ENCODE measurements at regions of chr4 and their contacts with region 1.

Region 1: DNA sequence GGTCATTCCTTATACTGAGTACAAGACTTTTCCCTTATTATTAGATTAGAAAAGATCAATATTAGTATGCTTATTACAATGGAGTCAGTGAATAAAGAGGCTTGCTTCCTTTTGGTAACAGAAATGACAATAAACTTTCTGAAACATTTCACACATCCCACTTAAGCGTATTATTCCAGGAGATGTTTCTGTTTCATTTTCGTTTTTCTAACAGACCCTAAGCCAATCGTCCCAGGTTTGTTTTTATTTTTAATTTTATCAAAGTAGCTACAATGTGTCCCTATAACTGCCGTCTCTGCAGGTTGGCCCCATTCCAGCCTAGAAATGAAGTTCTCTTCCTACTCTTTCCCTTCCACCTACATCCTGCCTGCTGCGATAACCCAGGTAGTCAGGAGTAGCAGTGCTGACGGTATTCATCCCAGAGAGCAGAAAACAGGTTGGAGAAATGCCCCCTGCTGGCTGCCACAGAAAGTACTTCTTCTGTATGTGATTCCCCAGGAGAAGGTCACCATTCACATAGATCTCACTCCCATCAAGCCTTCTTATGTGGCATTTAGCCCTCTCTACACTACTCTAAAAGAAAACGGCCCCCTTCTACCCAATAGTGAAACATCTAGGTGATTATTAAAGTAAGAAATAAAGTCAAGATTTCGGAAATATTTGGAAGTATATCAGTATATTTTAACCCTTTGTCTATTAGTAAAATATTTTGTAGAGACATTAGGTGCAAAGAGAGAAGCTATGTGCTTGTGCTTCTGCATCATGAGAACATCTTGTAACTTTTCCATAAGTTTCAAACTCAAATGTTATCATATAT is 40.4 kb downstream of the ENPEP start:
- DNase-seq: peak; percentile 79 to 84
- ATAC-seq: peak; percentile 99

Region 2: GRCh38 chr4:109998867-109999584 is 517.3 kb before region 1 on chr4:
- intact Hi-C with region 1: loop called (anchors 2 to 10 kb)
- DNase-seq: no peak
- ATAC-seq: peak; percentile 88

Region 3: GRCh38 chr4:110005461-110006056 is 510.8 kb before region 1 on chr4:
- intact Hi-C with region 1: loop called in 1 of 2 experiments (anchors 10 kb)
- DNase-seq: no peak
- ATAC-seq: peak; percentile 72

Region 4: GRCh38 chr4:110055158-110055768 is 461.1 kb before region 1 on chr4:
- intact Hi-C with region 1: loop called in 1 of 2 experiments (anchors 5 kb)
- DNase-seq: no peak
- ATAC-seq: peak; percentile 68

Region 5: DNA sequence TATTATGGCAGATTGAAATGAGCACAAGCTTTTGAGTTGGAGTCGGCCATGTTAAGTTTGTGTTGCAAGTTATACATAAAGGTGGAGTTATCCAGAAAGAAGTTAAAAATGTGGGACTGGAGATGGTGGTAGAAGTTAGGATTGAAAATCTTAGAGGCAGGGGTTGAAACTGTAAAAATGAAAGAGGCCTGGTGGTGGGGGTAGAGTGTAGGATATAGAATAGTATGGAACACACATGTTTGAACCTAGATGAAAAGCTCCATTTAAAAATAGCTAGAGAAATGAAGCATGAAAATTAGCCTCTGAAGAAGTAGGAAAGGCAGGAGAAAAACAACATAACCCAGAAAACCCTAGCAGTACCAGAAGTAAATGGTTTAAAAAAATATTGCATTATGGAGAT is 172.2 kb before region 1 on chr4:
- intact Hi-C with region 1: loop called in 1 of 2 experiments (anchors 10 kb)
- DNase-seq: peak in 1 of 2 donors; percentile 9
- ATAC-seq: peak; percentile 86

Region 6: GRCh38 chr4:110704748-110705439 is 188.6 kb after region 1 on chr4:
- intact Hi-C with region 1: no loop called
- DNase-seq: no peak
- ATAC-seq: no peak